Activated CD4-positive, alpha-beta memory T cell treated with anti-CD3 and anti-CD28 coated beads, Interleukin-2, amount 10 ng/mL, durations not matched to agents 7 days and 5 days (primary cell): ENCODE measurements at regions of chr5 and their contacts with region 1.

Region 1: DNA sequence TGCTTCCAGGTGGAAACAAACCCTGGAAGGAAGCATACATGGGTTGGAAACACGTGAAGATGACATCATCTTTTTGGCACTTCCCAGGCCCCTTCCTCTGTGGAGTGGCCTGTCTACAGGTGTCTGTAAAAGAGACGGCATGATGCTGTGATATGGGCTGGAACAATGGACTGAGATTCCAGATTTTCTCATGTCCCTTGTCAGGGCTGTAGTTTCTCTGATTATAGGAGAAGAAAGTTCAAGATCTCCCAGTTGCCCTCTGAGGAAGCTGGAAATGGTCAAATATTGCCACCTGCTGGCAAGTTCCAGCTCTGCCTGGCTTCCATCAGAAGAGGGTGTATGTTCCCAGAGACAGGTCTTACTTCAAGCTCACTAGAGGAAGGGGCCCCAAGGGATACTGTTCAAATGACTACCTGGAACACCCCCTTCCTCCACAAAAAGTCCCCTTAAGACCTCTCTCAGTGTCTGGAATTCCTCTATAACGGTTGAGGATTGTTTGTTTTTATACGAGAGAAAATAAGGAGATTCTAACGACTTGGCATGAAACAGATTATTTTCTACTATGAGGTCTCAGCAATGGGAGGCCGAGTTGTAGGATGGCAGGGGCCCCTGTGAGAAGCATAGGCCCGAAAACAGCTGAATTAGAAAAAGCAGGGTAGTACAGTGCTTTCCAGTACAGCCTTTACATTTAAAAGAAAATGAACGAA is 7.3 kb upstream of the ANXA6 start:
- DNase-seq: peak; percentile 86
- H3K4me3 Mint-ChIP-seq: no peak overlapping the region
- H3K27ac Mint-ChIP-seq: no peak overlapping the region
- H3K4me1 Mint-ChIP-seq: peaks cover 7% of the 10 kb centered on the region
- H3K27me3 Mint-ChIP-seq: no peaks in the 10 kb centered on the region

Region 2: GRCh38 chr5:151115274-151115905 is 49.4 kb before region 1 on chr5:
- CTCF ChIA-PET with region 1: interaction called, 107 read pairs
- POLR2A ChIA-PET with region 1: no interaction called
- DNase-seq: peak; percentile 71
- H3K4me3 Mint-ChIP-seq: no peak overlapping the region
- H3K27ac Mint-ChIP-seq: no peak overlapping the region
- H3K4me1 Mint-ChIP-seq: peaks cover 2% of the 10 kb centered on the region
- H3K27me3 Mint-ChIP-seq: no peaks in the 10 kb centered on the region

Region 3: DNA sequence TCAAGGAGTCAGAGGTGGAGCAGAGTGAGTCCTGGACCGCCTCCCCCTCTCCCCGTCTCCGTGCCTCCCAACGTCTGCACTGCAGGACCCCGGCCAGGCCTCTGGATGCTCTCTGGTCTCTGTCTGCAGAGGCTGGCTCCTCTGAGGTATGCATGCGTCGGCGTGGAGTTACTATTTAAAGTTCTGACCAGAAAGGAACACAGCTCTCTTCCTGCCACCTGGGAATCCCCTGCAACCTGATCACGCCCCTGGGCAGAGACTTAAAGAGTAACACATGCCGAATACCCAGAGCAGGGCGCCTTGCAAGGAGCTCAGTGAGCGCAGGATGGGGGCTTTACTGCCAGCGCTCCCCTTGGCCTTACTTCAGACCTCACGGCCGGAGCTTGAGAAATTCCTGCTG is 23.3 kb before region 1 on chr5:
- CTCF ChIA-PET with region 1: interaction called, 18 read pairs
- POLR2A ChIA-PET with region 1: interaction called, 3 read pairs
- DNase-seq: peak; percentile 61
- H3K4me3 Mint-ChIP-seq: peak overlapping the region; percentile 21
- H3K27ac Mint-ChIP-seq: peak overlapping the region; percentile 70
- H3K4me1 Mint-ChIP-seq: peaks cover 93% of the 10 kb centered on the region
- H3K27me3 Mint-ChIP-seq: no peaks in the 10 kb centered on the region

Region 4: DNA sequence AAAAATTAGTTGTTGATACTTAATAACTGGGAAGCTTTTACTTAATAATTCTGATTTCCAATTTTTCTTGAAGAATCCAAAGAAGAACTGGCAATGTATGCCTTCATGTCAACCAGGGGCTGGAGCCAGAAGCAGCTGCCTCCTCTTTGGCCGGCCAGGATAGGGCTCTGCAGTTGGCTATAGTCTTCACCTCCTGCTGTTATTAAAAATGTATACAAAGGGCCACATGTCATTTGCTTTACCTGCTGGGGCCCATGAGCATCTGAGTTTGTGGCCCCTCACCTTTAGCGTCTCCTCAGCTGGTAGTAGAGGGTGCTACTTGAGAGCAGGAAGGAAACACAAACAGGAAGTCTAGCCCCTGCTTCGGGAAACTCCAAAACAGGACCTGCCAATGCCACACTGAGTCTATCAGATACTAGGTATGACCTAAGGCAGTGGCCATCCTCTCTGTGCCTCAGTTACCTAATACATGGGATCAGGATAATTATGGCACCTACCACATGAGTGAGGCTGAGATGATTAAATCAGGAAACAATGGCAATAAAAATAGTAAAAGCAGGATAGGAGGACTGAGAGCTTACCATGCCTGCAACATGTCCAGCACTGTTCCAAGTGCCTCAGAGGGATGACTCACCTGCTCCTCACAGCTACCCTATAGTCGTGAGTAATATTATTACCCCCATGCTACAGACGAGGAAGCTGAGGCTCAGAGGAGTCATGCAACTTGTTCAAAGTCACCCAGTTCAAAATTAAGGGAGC is 37.7 kb after region 1 on chr5:
- CTCF ChIA-PET with region 1: interaction called, 10 read pairs
- POLR2A ChIA-PET with region 1: no interaction called
- DNase-seq: peak; percentile 39
- H3K4me3 Mint-ChIP-seq: no peak overlapping the region
- H3K27ac Mint-ChIP-seq: peak overlapping the region; percentile 68
- H3K4me1 Mint-ChIP-seq: peaks cover 22% of the 10 kb centered on the region
- H3K27me3 Mint-ChIP-seq: no peaks in the 10 kb centered on the region

Region 5: GRCh38 chr5:151223469-151224264 is 58.8 kb after region 1 on chr5 and contains the start of gene CCDC69:
- CTCF ChIA-PET with region 1: interaction called, 11 read pairs
- POLR2A ChIA-PET with region 1: interaction called, 10 read pairs
- DNase-seq: peak; percentile 67
- H3K4me3 Mint-ChIP-seq: peak within 1 kb of the TSS; percentile 78
- H3K27ac Mint-ChIP-seq: peak within 1 kb of the TSS; percentile 85
- H3K4me1 Mint-ChIP-seq: peaks cover 55% of the 10 kb centered on the region
- H3K27me3 Mint-ChIP-seq: no peaks in the 10 kb centered on the region
- total RNA-seq, gene CCDC69: 62.6 to 64.2 TPM